ENCODE measurements at regions of chr10 and their contacts with region 1.

Region 1: GRCh38 chr10:15719899-15720634 is at the start of gene ITGA8:
- DNase-seq: peak; percentile 80
- H3K4me3 ChIP-seq: peak within 1 kb of the TSS; percentile 50 to 76 (median 54)
- H3K27ac ChIP-seq: peak within 1 kb of the TSS; percentile 72 to 90 (median 84)
- H3K4me1 ChIP-seq: peaks cover 0 to 29% (median 13%) of the 10 kb centered on the region in 6 donors
- H3K27me3 ChIP-seq: peaks cover 0 to 72% (median 21%) of the 10 kb centered on the region in 7 donors
- CTCF ChIP-seq: peak in 10 of 11 experiments; percentile 14 to 69 (median 52)
- POLR2A ChIP-seq: no peak
- total RNA-seq, gene ITGA8: 18.8 to 60.3 (median 46.2) TPM

Region 2: DNA sequence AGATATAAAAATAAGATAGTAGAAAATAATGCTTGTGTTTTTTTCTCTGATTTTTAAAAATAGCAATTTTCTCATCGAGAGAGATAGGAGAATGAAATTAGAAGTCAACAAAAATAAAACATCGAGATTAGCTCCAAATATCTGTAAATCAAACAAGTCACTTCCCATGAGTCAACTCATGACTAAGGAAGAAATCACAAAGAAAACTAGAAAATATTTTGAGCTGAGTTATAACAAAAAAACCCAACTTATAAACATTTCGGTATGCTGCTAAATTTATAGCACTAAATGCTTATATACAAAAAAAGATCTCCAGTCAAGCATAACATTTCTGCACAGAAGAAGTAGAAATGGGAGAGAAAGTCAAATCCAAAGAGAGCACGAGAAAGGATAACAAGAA is 140.5 kb before region 1 on chr10:
- intact Hi-C with region 1: loop called (anchors 5 kb)
- DNase-seq: no peak
- H3K4me3 ChIP-seq: no peak overlapping the region
- H3K27ac ChIP-seq: no peak overlapping the region
- H3K4me1 ChIP-seq: no peaks in the 10 kb centered on the region
- H3K27me3 ChIP-seq: no peaks in the 10 kb centered on the region
- CTCF ChIP-seq: no peak
- POLR2A ChIP-seq: no peak

Region 3: DNA sequence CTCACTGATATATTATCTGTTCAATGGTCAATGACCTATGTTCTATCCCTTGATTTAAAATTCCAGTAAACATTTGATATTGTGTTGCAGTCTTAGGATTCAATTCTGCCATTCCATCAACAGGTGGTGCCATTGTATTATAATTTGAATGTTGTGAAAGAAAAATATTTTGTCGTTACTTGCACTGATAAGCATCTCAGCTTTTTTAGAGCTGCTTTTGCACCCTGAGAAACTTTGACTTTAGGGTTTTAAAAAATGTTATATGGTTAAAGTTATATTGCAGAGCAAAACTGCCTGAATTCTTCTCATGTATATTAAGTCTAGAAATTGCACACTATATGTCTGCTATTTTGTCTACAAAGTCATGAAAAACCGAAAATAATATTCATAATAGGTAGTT is 159.0 kb after region 1 on chr10:
- intact Hi-C with region 1: no loop called
- DNase-seq: no peak
- H3K4me3 ChIP-seq: no peak overlapping the region
- H3K27ac ChIP-seq: no peak overlapping the region
- H3K4me1 ChIP-seq: no peaks in the 10 kb centered on the region
- H3K27me3 ChIP-seq: peaks cover 0 to 70% (median 8%) of the 10 kb centered on the region in 7 donors
- CTCF ChIP-seq: peak in 10 of 11 experiments; percentile 16 to 59 (median 48)
- POLR2A ChIP-seq: no peak

Measured in spleen (tissue), 13 donors.